ENCODE measurements at regions of chr22 and their contacts with region 1.

Region 1: GRCh38 chr22:24938741-24939341 is 7.7 kb downstream of the LHFPL7 start:
- DNase-seq: peak; percentile 20
- H3K4me3 Mint-ChIP-seq: no peak overlapping the region
- H3K27ac Mint-ChIP-seq: no peak overlapping the region
- H3K4me1 Mint-ChIP-seq: no peaks in the 10 kb centered on the region
- H3K27me3 Mint-ChIP-seq: peaks cover 3% of the 10 kb centered on the region

Region 2: GRCh38 chr22:24466716-24467328 is 472.0 kb before region 1 on chr22:
- CTCF ChIA-PET with region 1: no interaction called
- POLR2A ChIA-PET with region 1: no interaction called
- intact Hi-C with region 1: no loop called
- DNase-seq: no peak
- H3K4me3 Mint-ChIP-seq: no peak overlapping the region
- H3K27ac Mint-ChIP-seq: no peak overlapping the region
- H3K4me1 Mint-ChIP-seq: peaks cover 6% of the 10 kb centered on the region
- H3K27me3 Mint-ChIP-seq: no peaks in the 10 kb centered on the region

Region 3: DNA sequence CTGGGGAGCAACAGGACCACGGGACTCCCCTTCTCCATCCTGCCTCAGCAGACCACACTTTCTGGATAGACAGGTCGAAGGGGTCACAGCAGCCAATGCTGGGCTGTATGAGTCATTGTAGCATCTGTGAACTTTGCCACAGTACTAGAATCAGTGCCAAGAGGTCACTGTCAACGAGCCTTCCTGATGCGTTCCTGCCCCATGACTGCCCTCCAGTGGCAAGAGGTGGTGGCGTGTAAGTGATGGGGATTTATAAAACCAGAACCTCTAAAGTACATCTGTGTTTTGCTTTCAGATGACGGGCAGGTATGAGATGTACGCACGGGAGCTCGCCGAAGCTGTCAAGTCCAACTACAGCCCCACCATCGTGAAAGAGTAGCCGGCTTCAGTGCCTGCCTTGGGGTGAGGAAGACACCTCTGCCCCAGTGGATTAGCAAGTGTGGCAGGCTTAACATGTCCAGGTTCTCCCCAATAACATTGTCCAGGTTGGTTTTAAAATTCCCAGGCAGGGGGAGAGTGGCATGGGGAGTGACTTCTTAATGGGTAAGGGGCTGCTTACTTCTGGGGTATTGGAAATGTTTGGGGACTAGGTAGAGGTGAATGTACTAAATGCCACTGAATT is 413.3 kb before region 1 on chr22:
- CTCF ChIA-PET with region 1: no interaction called
- POLR2A ChIA-PET with region 1: no interaction called
- intact Hi-C with region 1: no loop called
- DNase-seq: peak; percentile 90
- H3K4me3 Mint-ChIP-seq: no peak overlapping the region
- H3K27ac Mint-ChIP-seq: no peak overlapping the region
- H3K4me1 Mint-ChIP-seq: peaks cover 11% of the 10 kb centered on the region
- H3K27me3 Mint-ChIP-seq: no peaks in the 10 kb centered on the region

Region 4: DNA sequence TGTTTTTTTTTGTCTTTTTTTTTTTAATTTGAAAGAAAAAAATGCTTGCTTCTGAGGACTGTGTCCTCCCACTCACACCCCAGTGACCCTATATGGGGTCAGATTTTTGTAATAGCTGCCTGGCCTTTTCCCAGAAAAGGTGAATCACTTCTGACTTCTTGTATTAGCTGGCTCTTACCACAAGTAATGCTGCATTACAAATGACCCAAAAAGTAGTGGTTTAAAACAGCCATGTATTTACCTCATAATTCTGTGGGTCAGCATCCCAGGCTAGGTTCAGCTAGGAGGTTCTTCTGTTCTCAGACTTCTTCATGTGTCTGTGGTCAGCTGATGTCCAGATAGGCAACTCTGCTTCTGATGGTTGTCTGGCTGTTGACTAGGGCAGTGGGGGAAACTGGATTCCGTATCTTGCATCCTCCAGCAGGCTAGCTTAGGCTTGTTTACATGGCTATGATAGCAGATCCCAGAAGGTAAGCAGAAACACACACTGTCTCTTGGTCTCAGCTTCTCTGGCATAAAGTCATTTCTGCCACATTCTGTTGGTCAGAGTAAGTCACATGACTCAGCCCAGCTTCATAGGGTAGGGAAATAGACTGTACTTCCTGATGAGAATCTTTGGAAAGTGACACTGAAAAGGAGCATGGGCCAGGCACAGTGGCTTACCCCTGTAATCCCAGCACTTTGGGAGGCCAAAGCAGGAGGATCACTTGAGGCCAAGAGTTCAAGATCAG is 11.8 kb before region 1 on chr22:
- CTCF ChIA-PET with region 1: interaction called, 10 read pairs
- POLR2A ChIA-PET with region 1: no interaction called
- intact Hi-C with region 1: no loop called
- DNase-seq: no peak
- H3K4me3 Mint-ChIP-seq: no peak overlapping the region
- H3K27ac Mint-ChIP-seq: no peak overlapping the region
- H3K4me1 Mint-ChIP-seq: peaks cover 2% of the 10 kb centered on the region
- H3K27me3 Mint-ChIP-seq: peaks cover 5% of the 10 kb centered on the region

Region 5: GRCh38 chr22:24977370-24978221 is 38.8 kb after region 1 on chr22:
- CTCF ChIA-PET with region 1: no interaction called
- POLR2A ChIA-PET with region 1: no interaction called
- intact Hi-C with region 1: no loop called
- DNase-seq: no peak
- H3K4me3 Mint-ChIP-seq: no peak overlapping the region
- H3K27ac Mint-ChIP-seq: no peak overlapping the region
- H3K4me1 Mint-ChIP-seq: no peaks in the 10 kb centered on the region
- H3K27me3 Mint-ChIP-seq: no peaks in the 10 kb centered on the region

Region 6: GRCh38 chr22:25048659-25049647 is 110.1 kb after region 1 on chr22:
- CTCF ChIA-PET with region 1: interaction called, 210 read pairs
- POLR2A ChIA-PET with region 1: no interaction called
- intact Hi-C with region 1: loop called (anchors 2 kb)
- DNase-seq: peak; percentile 80
- H3K4me3 Mint-ChIP-seq: no peak overlapping the region
- H3K27ac Mint-ChIP-seq: no peak overlapping the region
- H3K4me1 Mint-ChIP-seq: peaks cover 8% of the 10 kb centered on the region
- H3K27me3 Mint-ChIP-seq: peaks cover 6% of the 10 kb centered on the region

Measured in activated CD4-positive, alpha-beta memory T cell treated with anti-CD3 and anti-CD28 coated beads for 36 hours (primary cell).